ENCODE measurements at regions of chr4 and their contacts with region 1.

Region 1: GRCh38 chr4:7802093-7802726 is 137.5 kb downstream of the AFAP1 start:
- DNase-seq: peak; percentile 51 to 73
- H3K4me3 ChIP-seq: no peak overlapping the region
- H3K27ac ChIP-seq: no peak overlapping the region
- H3K4me1 ChIP-seq: peaks cover 23% of the 10 kb centered on the region
- H3K27me3 ChIP-seq: no peaks in the 10 kb centered on the region
- CTCF ChIP-seq: peak; percentile 86

Region 2: GRCh38 chr4:7880683-7881082 is 78.5 kb after region 1 on chr4:
- CTCF ChIA-PET with region 1: interaction called, 16 read pairs
- POLR2A ChIA-PET with region 1: no interaction called
- intact Hi-C with region 1: no loop called
- DNase-seq: no peak
- H3K4me3 ChIP-seq: no peak overlapping the region
- H3K27ac ChIP-seq: no peak overlapping the region
- H3K4me1 ChIP-seq: no peaks in the 10 kb centered on the region; the same call in 1 of the 2 replicates
- H3K27me3 ChIP-seq: no peaks in the 10 kb centered on the region
- CTCF ChIP-seq: no peak

Region 3: DNA sequence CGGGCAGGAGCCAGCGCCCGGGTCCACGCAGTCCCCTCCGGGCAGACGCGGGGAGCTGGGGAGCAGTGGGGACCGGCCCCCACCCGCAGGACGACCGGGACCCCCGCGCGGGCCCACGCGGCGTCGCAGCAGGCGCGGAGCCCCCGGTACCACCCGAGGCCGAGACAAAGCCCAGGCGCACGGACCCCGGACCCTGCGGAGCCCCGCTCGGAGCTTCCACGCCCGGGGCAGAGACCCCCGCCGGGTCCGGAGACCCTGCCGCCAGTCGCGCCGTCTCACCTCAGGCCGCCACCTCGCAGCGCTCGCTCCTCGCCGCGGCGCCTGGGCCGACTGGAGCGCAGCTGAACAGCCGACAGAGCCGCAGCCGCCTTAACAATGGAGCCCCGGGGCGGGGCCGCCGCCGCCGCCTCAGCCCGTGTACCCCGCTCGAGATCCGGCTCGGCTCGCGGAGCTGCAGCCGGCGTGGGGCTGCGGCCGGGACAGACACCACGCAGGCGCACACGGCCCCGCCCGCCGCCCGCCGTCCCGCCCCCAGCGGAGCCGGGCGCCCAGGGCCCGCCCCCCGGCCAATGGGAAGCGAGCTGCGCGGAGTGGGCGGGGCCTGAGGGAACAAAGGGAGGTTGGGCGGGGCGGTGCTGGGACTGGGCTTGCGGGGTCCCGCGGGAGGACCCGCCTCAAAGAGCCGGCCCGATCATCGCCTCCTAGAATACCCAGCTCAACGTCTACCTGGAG is 137.3 kb after region 1 on chr4 and contains the start of gene AFAP1:
- CTCF ChIA-PET with region 1: interaction called, 6 read pairs
- POLR2A ChIA-PET with region 1: no interaction called
- intact Hi-C with region 1: loop called (anchors 1 kb)
- DNase-seq: peak; percentile 49 to 88
- H3K4me3 ChIP-seq: peak within 1 kb of the TSS; percentile 85
- H3K27ac ChIP-seq: peak within 1 kb of the TSS; percentile 83
- H3K4me1 ChIP-seq: peaks cover 69% of the 10 kb centered on the region
- H3K27me3 ChIP-seq: no peaks in the 10 kb centered on the region
- CTCF ChIP-seq: no peak
- total RNA-seq, gene AFAP1: 69.6 and 84.1 TPM in 2 replicates

Region 4: DNA sequence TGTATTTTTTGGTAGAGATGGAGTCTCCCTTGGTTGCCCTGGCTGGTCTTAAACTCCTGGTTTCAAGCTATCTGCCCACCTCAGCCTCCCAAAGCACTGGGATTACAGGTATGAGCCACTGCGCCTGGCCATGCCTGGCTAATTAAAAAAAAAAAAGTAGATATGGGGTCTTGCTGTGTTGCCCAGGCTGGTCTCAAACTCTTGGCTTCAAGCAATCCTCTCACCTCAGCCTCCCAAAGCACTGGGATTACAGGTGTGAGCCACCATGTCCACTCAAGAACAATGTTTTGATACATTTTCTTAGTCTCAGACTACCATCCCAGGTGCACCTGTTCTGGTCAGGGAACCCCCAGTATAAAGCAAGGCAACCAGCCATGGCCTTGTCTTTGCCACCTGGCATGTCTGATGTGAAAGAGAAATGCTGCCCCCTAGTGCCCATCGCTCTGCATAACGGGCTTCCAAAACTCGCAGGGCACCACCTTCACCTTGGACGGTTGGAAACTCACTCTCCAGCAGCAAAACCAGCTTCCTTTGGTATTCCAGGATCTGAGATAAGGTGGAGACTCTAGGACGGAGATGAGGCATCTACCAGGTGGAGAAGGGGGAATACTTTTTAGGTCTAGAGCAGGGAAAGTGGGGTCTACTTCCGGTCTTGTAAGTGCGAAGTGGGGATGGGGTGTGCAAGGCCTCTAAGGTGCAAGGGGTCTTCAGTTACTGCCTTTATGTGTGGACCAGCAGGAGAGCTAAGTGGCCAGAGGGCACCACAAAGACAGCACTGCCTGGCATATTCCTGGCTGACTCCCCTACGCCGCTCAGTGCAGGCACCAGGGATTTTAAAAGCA is 185.2 kb after region 1 on chr4:
- CTCF ChIA-PET with region 1: interaction called, 4 read pairs
- POLR2A ChIA-PET with region 1: no interaction called
- intact Hi-C with region 1: loop called (anchors 1 kb)
- DNase-seq: peak; percentile 58 to 77
- H3K4me3 ChIP-seq: no peak overlapping the region
- H3K27ac ChIP-seq: peak overlapping the region; percentile 49
- H3K4me1 ChIP-seq: peaks cover 13% of the 10 kb centered on the region
- H3K27me3 ChIP-seq: no peaks in the 10 kb centered on the region
- CTCF ChIP-seq: peak; percentile 90